Heart left ventricle (tissue), 16 donors: ENCODE measurements at regions of chr3 and their contacts with region 1.

Region 1: GRCh38 chr3:158742871-158743663 is 10.8 kb upstream of the RARRES1 start:
- DNase-seq: no peak
- ATAC-seq: no peak
- H3K4me3 ChIP-seq: no peak overlapping the region
- H3K27ac ChIP-seq: peak overlapping the region in 1 of 12 donors; percentile 32
- H3K4me1 ChIP-seq: peaks cover 0 to 15% (median 0%) of the 10 kb centered on the region in 12 donors
- H3K27me3 ChIP-seq: no peaks in the 10 kb centered on the region
- CTCF ChIP-seq: no peak
- POLR2A ChIP-seq: no peak

Region 2: GRCh38 chr3:158672293-158673176 is 70.5 kb before region 1 on chr3 and contains the start of gene LXN:
- intact Hi-C with region 1: no loop called
- DNase-seq: peak; percentile 83 to 90 (median 85)
- ATAC-seq: peak; percentile 95 to 99 (median 99)
- H3K4me3 ChIP-seq: peak within 1 kb of the TSS in 11 of 12 donors; percentile 21 to 68 (median 60)
- H3K27ac ChIP-seq: peak within 1 kb of the TSS; percentile 4 to 82 (median 72)
- H3K4me1 ChIP-seq: peaks cover 0 to 23% (median 5%) of the 10 kb centered on the region in 12 donors
- H3K27me3 ChIP-seq: no peaks in the 10 kb centered on the region
- CTCF ChIP-seq: peak; percentile 34 to 89 (median 55)
- POLR2A ChIP-seq: no peak
- total RNA-seq, gene LXN: 2.3 to 21.8 (median 3.5) TPM

Region 3: GRCh38 chr3:158773845-158774830 is 31.1 kb after region 1 on chr3:
- intact Hi-C with region 1: loop called in 2 of 10 experiments (anchors 5 kb)
- DNase-seq: no peak
- ATAC-seq: peak in 2 of 4 donors; percentile 65 to 70
- H3K4me3 ChIP-seq: no peak overlapping the region
- H3K27ac ChIP-seq: peak overlapping the region in 4 of 12 donors; percentile 11 to 85 (median 35)
- H3K4me1 ChIP-seq: peaks cover 0 to 46% (median 15%) of the 10 kb centered on the region in 12 donors
- H3K27me3 ChIP-seq: no peaks in the 10 kb centered on the region
- CTCF ChIP-seq: no peak
- POLR2A ChIP-seq: no peak